WTC11 (cell line): ENCODE measurements at regions of chr9 and their contacts with region 1.

Region 1: DNA sequence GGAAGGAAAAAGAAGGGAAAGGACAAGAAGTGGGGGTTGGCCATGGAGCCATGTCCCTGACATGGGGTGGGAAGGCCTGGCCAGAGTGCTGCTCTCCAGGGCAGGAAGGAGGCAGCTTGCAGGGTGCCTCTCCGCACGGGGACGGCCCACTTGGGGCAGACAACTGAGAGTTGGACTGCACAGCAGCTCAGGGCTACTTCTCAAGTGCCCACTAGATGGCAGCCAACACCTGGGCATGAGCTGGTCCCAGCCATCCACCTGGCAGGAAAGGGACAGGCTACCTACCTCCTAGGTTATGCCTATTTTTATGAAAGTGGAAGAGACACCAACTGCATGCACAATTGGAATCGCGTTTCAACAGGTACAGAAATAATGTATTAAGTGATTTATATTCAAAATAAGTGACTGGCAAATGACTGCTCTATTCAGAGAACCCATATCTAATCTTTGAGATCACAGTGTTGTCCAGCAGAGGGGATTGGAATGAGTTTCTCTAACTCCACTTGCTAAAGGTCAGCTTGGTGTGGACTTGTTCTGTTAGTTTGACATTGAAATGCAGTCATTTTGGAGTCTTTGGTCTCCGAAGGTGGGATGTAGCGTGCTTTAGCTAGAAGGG is 113.4 kb downstream of the SYK start:
- DNase-seq: peak; percentile 82
- ATAC-seq: peak; percentile 95
- H3K4me3 Mint-ChIP-seq: no peak overlapping the region
- H3K27ac Mint-ChIP-seq: no peak overlapping the region
- H3K4me1 Mint-ChIP-seq: no peaks in the 10 kb centered on the region
- H3K27me3 Mint-ChIP-seq: no peaks in the 10 kb centered on the region
- CTCF ChIP-seq: peak; percentile 86

Region 2: GRCh38 chr9:90894986-90895687 is 19.8 kb before region 1 on chr9:
- CTCF ChIA-PET with region 1: interaction called, 21 read pairs
- POLR2A ChIA-PET with region 1: no interaction called
- DNase-seq: peak; percentile 49
- ATAC-seq: 0 out of 2 replicates have a peak, but pooled peaks have one; percentile 12
- H3K4me3 Mint-ChIP-seq: no peak overlapping the region
- H3K27ac Mint-ChIP-seq: no peak overlapping the region
- H3K4me1 Mint-ChIP-seq: peaks cover 58% of the 10 kb centered on the region
- H3K27me3 Mint-ChIP-seq: no peaks in the 10 kb centered on the region
- CTCF ChIP-seq: peak; percentile 64

Region 3: GRCh38 chr9:90925581-90926257 is 10.7 kb after region 1 on chr9:
- CTCF ChIA-PET with region 1: no interaction called
- POLR2A ChIA-PET with region 1: no interaction called
- DNase-seq: no peak
- ATAC-seq: no peak
- H3K4me3 Mint-ChIP-seq: no peak overlapping the region
- H3K27ac Mint-ChIP-seq: no peak overlapping the region
- H3K4me1 Mint-ChIP-seq: peaks cover 5% of the 10 kb centered on the region; the same call in 1 of the 2 replicates
- H3K27me3 Mint-ChIP-seq: no peaks in the 10 kb centered on the region
- CTCF ChIP-seq: no peak

Region 4: GRCh38 chr9:90964101-90965020 is 49.4 kb after region 1 on chr9:
- CTCF ChIA-PET with region 1: interaction called, 16 read pairs
- POLR2A ChIA-PET with region 1: no interaction called
- DNase-seq: peak; percentile 27
- ATAC-seq: peak; percentile 81
- H3K4me3 Mint-ChIP-seq: no peak overlapping the region
- H3K27ac Mint-ChIP-seq: no peak overlapping the region
- H3K4me1 Mint-ChIP-seq: peaks cover 40% of the 10 kb centered on the region
- H3K27me3 Mint-ChIP-seq: no peaks in the 10 kb centered on the region; the same call in none of the 2 replicates
- CTCF ChIP-seq: no peak

Region 5: GRCh38 chr9:91017226-91017625 is 102.2 kb after region 1 on chr9:
- CTCF ChIA-PET with region 1: interaction called, 11 read pairs
- POLR2A ChIA-PET with region 1: no interaction called
- DNase-seq: no peak
- ATAC-seq: no peak
- H3K4me3 Mint-ChIP-seq: no peak overlapping the region
- H3K27ac Mint-ChIP-seq: no peak overlapping the region
- H3K4me1 Mint-ChIP-seq: peaks cover 5% of the 10 kb centered on the region; the same call in 1 of the 2 replicates
- H3K27me3 Mint-ChIP-seq: no peaks in the 10 kb centered on the region
- CTCF ChIP-seq: no peak

Region 6: GRCh38 chr9:91089405-91090129 is 174.6 kb after region 1 on chr9:
- CTCF ChIA-PET with region 1: interaction called, 10 read pairs
- POLR2A ChIA-PET with region 1: no interaction called
- DNase-seq: peak; percentile 29
- ATAC-seq: peak; percentile 86
- H3K4me3 Mint-ChIP-seq: no peak overlapping the region
- H3K27ac Mint-ChIP-seq: no peak overlapping the region
- H3K4me1 Mint-ChIP-seq: peaks cover 18% of the 10 kb centered on the region
- H3K27me3 Mint-ChIP-seq: no peaks in the 10 kb centered on the region
- CTCF ChIP-seq: no peak

Region 7: GRCh38 chr9:91422758-91423711 is 508.1 kb after region 1 on chr9:
- CTCF ChIA-PET with region 1: interaction called, 69 read pairs
- POLR2A ChIA-PET with region 1: interaction called, 8 read pairs
- DNase-seq: peak; percentile 48
- ATAC-seq: peak; percentile 11
- H3K4me3 Mint-ChIP-seq: peak overlapping the region; percentile 99
- H3K27ac Mint-ChIP-seq: peak overlapping the region; percentile 94
- H3K4me1 Mint-ChIP-seq: peaks cover 42% of the 10 kb centered on the region
- H3K27me3 Mint-ChIP-seq: peaks cover 52% of the 10 kb centered on the region
- CTCF ChIP-seq: no peak